Activated CD4-positive, alpha-beta memory T cell treated with anti-CD3 and anti-CD28 coated beads for 36 hours (primary cell): ENCODE measurements at regions of chr22 and their contacts with region 1.

Region 1: DNA sequence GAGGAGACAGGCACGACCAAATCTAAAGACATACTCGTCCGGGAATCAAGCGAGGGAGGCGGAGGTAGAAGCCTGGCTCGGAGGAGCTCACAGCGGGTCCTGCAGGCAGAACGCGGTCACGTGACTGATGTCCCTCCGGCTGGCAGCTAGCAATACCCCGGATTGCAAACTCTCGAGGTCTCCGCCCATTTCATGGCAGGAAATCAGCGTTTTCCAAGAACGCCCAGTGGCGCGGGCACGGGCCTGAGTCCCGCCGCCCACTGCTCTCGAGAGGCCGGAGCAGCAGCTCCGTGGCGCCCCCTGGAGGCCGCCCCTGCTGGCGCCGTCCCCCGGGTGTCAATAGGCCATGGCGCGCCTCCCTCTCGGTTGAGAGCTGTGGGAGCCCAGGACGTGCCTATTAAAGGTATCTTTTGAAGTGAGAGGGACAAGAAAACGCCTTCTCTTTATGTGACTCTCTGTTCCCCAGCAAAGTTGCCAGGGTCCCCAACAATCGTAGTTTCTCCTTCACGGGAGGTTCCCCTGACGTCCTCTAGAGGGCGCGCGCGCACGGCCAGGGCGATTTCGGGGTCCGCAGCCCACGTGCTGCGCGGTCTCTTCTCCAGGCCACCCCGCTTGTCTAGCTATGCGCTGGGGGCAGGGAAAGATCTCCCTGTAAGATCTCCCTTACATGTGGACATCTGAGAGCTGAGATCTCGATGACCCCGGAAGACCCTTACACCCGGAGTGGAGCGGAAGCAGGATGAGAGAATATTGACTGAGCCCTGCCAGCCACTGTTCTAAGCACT is 37.3 kb upstream of the RBFOX2 start:
- DNase-seq: peak; percentile 85
- H3K4me3 Mint-ChIP-seq: peak overlapping the region; percentile 78
- H3K27ac Mint-ChIP-seq: peak overlapping the region; percentile 69
- H3K4me1 Mint-ChIP-seq: peaks cover 4% of the 10 kb centered on the region
- H3K27me3 Mint-ChIP-seq: no peaks in the 10 kb centered on the region

Region 2: DNA sequence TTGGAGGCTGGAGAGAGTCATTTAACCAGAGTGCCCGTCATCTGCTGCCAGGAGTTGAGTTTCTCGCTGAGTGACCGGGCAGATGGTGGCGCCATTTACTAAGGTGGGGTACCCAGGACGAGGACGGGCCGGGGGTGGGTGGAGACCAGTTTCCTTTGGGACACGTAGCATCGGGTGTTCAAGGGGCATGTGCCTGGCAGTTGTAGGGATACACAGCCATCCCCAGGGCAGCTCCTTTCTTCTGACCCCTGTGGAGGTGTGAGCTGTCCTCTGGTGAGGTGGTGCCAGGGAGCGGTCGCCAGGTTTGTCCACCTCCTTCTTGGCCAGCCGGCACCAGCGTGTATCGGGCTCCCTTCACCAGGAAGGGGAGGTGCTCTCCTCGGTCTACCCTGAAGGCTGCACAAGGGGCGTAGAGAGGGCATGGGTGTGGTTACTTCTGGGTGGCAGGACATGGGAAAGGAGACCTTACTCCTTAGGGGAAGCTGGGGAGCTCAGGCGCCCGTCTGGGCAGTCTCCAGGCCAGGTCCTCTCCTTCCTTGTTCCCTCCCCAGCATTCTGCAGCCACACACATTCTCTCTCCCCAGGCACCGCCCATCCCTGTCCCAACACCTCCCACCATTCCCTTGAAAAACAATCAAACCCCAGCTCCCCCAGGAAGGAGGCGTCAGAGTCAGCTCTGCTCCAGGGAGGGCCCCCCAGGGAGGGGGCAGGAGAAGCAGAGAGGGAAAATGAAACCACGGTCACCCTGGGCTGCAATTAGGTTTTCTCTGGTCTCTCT is 438.5 kb before region 1 on chr22:
- CTCF ChIA-PET with region 1: interaction called, 20 read pairs
- POLR2A ChIA-PET with region 1: no interaction called
- intact Hi-C with region 1: loop called (anchors 5 kb)
- DNase-seq: peak; percentile 82
- H3K4me3 Mint-ChIP-seq: peak overlapping the region; percentile 56
- H3K27ac Mint-ChIP-seq: peak overlapping the region; percentile 30
- H3K4me1 Mint-ChIP-seq: peaks cover 19% of the 10 kb centered on the region
- H3K27me3 Mint-ChIP-seq: peaks cover 3% of the 10 kb centered on the region

Region 3: DNA sequence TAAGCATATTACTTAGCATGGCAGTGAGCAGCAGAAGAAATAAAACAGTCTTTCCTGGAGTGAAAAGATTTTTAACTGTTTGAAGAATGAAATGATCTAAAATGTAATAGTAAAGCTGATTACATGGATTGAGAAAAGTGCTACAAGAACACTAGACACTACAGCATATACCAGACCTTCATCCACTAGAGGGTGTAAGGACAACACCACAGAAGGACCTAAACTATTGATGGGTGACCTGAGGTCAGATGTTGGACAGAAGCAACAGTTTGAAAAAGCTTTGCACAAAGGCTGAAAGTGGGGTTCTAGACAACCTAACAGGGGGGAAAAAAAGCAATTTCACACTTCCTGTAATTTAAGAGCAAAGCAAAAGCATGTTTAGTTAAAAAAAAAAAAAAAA is 135.0 kb before region 1 on chr22:
- CTCF ChIA-PET with region 1: interaction called, 12 read pairs
- POLR2A ChIA-PET with region 1: no interaction called
- intact Hi-C with region 1: loop called (anchors 1 kb)
- DNase-seq: no peak
- H3K4me3 Mint-ChIP-seq: no peak overlapping the region
- H3K27ac Mint-ChIP-seq: no peak overlapping the region
- H3K4me1 Mint-ChIP-seq: no peaks in the 10 kb centered on the region
- H3K27me3 Mint-ChIP-seq: peaks cover 5% of the 10 kb centered on the region

Region 4: GRCh38 chr22:36037102-36037758 is 28.7 kb before region 1 on chr22:
- CTCF ChIA-PET with region 1: interaction called, 17 read pairs
- POLR2A ChIA-PET with region 1: no interaction called
- intact Hi-C with region 1: no loop called
- DNase-seq: no peak
- H3K4me3 Mint-ChIP-seq: no peak overlapping the region
- H3K27ac Mint-ChIP-seq: no peak overlapping the region
- H3K4me1 Mint-ChIP-seq: no peaks in the 10 kb centered on the region
- H3K27me3 Mint-ChIP-seq: peaks cover 34% of the 10 kb centered on the region

Region 5: GRCh38 chr22:36104988-36105387 is 39.0 kb after region 1 on chr22:
- CTCF ChIA-PET with region 1: interaction called, 15 read pairs
- POLR2A ChIA-PET with region 1: no interaction called
- intact Hi-C with region 1: no loop called
- DNase-seq: no peak
- H3K4me3 Mint-ChIP-seq: no peak overlapping the region
- H3K27ac Mint-ChIP-seq: no peak overlapping the region
- H3K4me1 Mint-ChIP-seq: no peaks in the 10 kb centered on the region
- H3K27me3 Mint-ChIP-seq: peaks cover 3% of the 10 kb centered on the region

Region 6: DNA sequence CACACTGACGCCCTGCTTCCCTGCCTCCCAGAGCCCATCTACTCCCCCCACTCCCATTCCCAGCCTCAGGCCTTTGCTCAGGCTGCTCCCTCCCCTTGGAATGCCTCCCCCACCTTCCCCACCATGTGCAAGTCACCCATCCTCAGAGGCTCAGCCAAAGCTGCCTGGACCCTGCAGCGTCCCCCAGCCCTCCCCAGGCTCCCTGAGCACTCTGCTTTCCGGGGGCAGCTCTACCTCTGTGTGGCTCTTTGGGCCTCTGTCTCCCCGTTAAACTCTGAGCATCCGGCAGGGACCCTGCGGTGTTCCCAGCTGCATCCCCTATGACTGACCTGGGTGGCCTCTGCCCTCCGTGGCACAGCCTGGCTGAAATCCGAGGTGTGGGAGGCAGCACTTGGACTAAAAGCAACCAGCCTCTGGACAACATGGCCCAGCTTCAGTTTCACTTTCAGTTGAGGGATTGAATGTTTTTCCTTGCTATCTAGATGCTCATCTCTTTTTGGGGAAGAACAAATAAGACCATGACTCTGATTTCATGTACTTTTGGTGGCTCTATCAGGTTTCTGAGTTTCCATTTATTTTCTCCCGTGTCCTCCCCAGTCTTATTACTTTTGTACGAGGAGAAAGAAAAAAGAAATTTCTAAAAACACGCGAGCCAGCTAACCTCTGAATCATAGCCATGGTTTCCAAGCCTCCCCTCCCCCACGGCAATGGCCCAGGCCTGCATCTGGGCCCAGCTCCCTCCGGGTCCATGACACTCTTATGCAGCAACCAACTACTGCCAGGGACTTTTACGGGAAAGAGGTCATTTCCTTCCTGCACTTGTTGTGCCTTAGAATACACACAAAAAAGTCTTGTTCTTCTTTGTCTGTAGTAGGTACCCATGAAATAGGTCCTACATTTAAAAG is 90.8 kb after region 1 on chr22:
- CTCF ChIA-PET with region 1: interaction called, 24 read pairs
- POLR2A ChIA-PET with region 1: no interaction called
- intact Hi-C with region 1: no loop called
- DNase-seq: peak; percentile 88
- H3K4me3 Mint-ChIP-seq: peak overlapping the region; percentile 90
- H3K27ac Mint-ChIP-seq: peak overlapping the region; percentile 96
- H3K4me1 Mint-ChIP-seq: peaks cover 92% of the 10 kb centered on the region
- H3K27me3 Mint-ChIP-seq: no peaks in the 10 kb centered on the region

Region 7: GRCh38 chr22:36194971-36195370 is 129.0 kb after region 1 on chr22:
- CTCF ChIA-PET with region 1: no interaction called
- POLR2A ChIA-PET with region 1: no interaction called
- intact Hi-C with region 1: no loop called
- DNase-seq: peak; percentile 63
- H3K4me3 Mint-ChIP-seq: no peak overlapping the region
- H3K27ac Mint-ChIP-seq: no peak overlapping the region
- H3K4me1 Mint-ChIP-seq: peaks cover 24% of the 10 kb centered on the region
- H3K27me3 Mint-ChIP-seq: no peaks in the 10 kb centered on the region